ENCODE measurements at regions of chr2 and their contacts with region 1.

Region 1: DNA sequence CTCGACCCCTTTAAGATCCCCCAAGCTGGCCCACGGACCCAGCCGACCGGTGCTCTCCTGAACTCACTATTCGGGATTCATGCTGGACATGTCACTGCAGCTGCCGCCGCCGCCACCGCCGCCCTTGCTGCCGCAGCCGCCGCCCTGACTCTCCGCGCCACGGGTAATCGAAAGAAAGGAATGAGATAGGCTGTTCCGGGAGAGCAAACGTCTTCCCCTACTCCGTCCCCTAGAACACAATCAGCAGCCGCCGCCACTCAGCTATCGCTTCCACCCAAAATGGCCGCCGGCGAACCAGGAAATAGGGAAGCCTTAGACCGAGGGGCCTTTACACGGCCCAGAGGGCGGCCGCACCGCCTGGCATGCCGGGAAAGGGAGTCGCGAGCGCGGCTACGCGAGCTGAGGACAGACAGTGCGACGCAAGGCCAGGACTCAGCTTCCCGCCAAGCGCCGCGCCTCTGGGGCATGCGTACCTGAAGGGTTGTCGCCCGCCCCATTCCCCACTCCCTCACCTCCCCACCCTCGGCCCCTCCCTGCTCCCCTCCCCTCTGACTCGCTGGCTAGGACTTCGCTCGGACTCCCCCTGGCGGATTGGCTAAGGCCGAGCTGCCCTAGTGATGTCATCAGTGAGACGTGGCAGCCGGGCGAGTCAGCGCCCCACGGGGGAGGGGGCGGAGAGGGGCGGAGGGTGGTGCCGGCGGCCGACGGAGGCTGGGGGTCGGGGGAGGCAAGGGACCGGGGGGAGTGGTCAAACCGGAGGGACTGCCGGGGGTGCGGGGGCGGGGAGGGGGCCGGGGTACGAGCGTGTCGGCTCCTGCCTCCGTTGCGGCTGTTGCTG is at the start of gene RAB1A:
- DNase-seq: peak; percentile 95 to 100 (median 99)
- H3K4me3 ChIP-seq: peak within 1 kb of the TSS; percentile 74 to 94
- H3K4me3 Mint-ChIP-seq: peak within 1 kb of the TSS; percentile 97 to 100 (median 99)
- H3K27ac ChIP-seq: peak within 1 kb of the TSS; percentile 97
- H3K27ac Mint-ChIP-seq: peak within 1 kb of the TSS; percentile 94 to 100 (median 99)
- H3K4me1 ChIP-seq: peaks cover 45% of the 10 kb centered on the region
- H3K4me1 Mint-ChIP-seq: peaks cover 20 to 51% (median 28%) of the 10 kb centered on the region in 4 donors
- H3K27me3 ChIP-seq: no peaks in the 10 kb centered on the region
- H3K27me3 Mint-ChIP-seq: no peaks in the 10 kb centered on the region
- total RNA-seq, gene RAB1A: 53.3 to 58.4 TPM

Region 2: DNA sequence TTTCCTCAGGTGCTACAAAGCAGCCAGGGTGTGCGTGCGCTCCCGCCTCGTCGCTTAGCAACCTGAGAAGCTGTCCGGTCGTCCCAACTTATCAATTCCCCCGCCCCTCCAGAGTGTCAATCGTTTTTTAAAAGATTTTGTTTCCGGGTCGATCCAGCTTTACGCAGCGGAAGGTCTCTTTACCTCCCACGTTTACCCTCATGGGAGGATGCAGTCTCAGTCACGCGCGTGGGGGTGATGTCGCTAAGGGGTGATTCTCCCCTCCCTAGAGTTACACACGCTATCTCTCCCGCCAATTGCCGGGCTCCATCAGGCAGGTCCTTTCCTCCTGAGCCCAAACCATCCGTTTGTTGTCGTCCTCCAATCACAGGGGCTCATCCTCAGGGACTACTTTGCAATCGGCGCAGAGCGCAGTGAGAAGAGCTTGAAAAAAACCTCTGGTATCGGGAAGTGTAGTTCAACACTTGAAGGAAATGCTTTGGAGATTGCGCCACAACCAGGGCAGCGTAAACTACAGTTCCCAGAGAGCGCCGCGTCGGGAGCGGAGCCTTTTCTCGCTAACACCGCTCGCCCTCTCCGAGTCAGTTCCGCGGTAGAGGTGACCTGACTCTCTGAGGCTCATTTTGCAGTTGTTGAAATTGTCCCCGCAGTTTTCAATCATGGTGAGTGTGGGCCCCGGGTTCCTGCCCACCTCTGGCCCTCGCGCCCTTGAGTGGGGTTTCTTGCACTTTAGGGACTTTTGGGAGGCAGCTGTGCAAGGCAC is 1541.5 kb before region 1 on chr2 and contains the starts of genes MDH1 and WDPCP:
- CTCF ChIA-PET with region 1: no interaction called
- POLR2A ChIA-PET with region 1: interaction called, 3 read pairs
- intact Hi-C with region 1: loop called (anchors 2 kb)
- DNase-seq: peak; percentile 93 to 99 (median 97)
- H3K4me3 ChIP-seq: peak within 1 kb of the TSS; percentile 78 to 96
- H3K4me3 Mint-ChIP-seq: peak within 1 kb of the TSS; percentile 89 to 96 (median 95)
- H3K27ac ChIP-seq: peak within 1 kb of the TSS; percentile 82
- H3K27ac Mint-ChIP-seq: peak within 1 kb of the TSS; percentile 92 to 99 (median 98)
- H3K4me1 ChIP-seq: peaks cover 32% of the 10 kb centered on the region
- H3K4me1 Mint-ChIP-seq: peaks cover 20 to 54% (median 43%) of the 10 kb centered on the region in 4 donors
- H3K27me3 ChIP-seq: no peaks in the 10 kb centered on the region
- H3K27me3 Mint-ChIP-seq: no peaks in the 10 kb centered on the region
- total RNA-seq, gene MDH1: 93.8 to 102 TPM
- total RNA-seq, gene WDPCP: 10.5 to 13.2 TPM

Region 3: GRCh38 chr2:64988420-64989125 is 141.5 kb before region 1 on chr2:
- CTCF ChIA-PET with region 1: no interaction called
- POLR2A ChIA-PET with region 1: interaction called, 19 read pairs
- intact Hi-C with region 1: loop called (anchors 1 kb)
- DNase-seq: peak in 4 of 5 donors; percentile 53 to 76 (median 60)
- H3K4me3 ChIP-seq: peak overlapping the region; percentile 52 to 56
- H3K4me3 Mint-ChIP-seq: peak overlapping the region; percentile 84 to 91 (median 89)
- H3K27ac ChIP-seq: peak overlapping the region; percentile 48
- H3K27ac Mint-ChIP-seq: peak overlapping the region; percentile 38 to 93 (median 71)
- H3K4me1 ChIP-seq: peaks cover 32% of the 10 kb centered on the region
- H3K4me1 Mint-ChIP-seq: peaks cover 16 to 44% (median 33%) of the 10 kb centered on the region in 4 donors
- H3K27me3 ChIP-seq: no peaks in the 10 kb centered on the region
- H3K27me3 Mint-ChIP-seq: no peaks in the 10 kb centered on the region

Region 4: GRCh38 chr2:65116645-65117044 is 13.4 kb before region 1 on chr2:
- CTCF ChIA-PET with region 1: interaction called, 10 read pairs
- POLR2A ChIA-PET with region 1: interaction called, 24 read pairs
- intact Hi-C with region 1: no loop called
- DNase-seq: no peak
- H3K4me3 ChIP-seq: no peak overlapping the region
- H3K4me3 Mint-ChIP-seq: peak overlapping the region in 4 of 8 donors; percentile 18 to 51 (median 32)
- H3K27ac ChIP-seq: no peak overlapping the region
- H3K27ac Mint-ChIP-seq: peak overlapping the region in 3 of 7 donors; percentile 20 to 57 (median 47)
- H3K4me1 ChIP-seq: peaks cover 61% of the 10 kb centered on the region
- H3K4me1 Mint-ChIP-seq: peaks cover 40 to 87% (median 65%) of the 10 kb centered on the region in 4 donors
- H3K27me3 ChIP-seq: no peaks in the 10 kb centered on the region
- H3K27me3 Mint-ChIP-seq: no peaks in the 10 kb centered on the region

Region 5: GRCh38 chr2:65227425-65228262 is 97.6 kb after region 1 on chr2 and contains the start of gene ACTR2:
- CTCF ChIA-PET with region 1: interaction called, 5 read pairs
- POLR2A ChIA-PET with region 1: interaction called, 35 read pairs
- intact Hi-C with region 1: loop called (anchors 1 kb)
- DNase-seq: peak; percentile 93 to 97 (median 95)
- H3K4me3 ChIP-seq: peak within 1 kb of the TSS; percentile 96 to 97
- H3K4me3 Mint-ChIP-seq: peak within 1 kb of the TSS; percentile 97 to 100 (median 99)
- H3K27ac ChIP-seq: peak within 1 kb of the TSS; percentile 100
- H3K27ac Mint-ChIP-seq: peak within 1 kb of the TSS; percentile 99 to 100 (median 99)
- H3K4me1 ChIP-seq: peaks cover 50% of the 10 kb centered on the region
- H3K4me1 Mint-ChIP-seq: peaks cover 23 to 58% (median 35%) of the 10 kb centered on the region in 4 donors
- H3K27me3 ChIP-seq: no peaks in the 10 kb centered on the region
- H3K27me3 Mint-ChIP-seq: no peaks in the 10 kb centered on the region
- total RNA-seq, gene ACTR2: 298 to 312 TPM

Measured in CD4-positive, alpha-beta memory T cell (primary cell).